Spleen (tissue), 13 donors: ENCODE measurements at regions of chr16 and their contacts with region 1.

Region 1: DNA sequence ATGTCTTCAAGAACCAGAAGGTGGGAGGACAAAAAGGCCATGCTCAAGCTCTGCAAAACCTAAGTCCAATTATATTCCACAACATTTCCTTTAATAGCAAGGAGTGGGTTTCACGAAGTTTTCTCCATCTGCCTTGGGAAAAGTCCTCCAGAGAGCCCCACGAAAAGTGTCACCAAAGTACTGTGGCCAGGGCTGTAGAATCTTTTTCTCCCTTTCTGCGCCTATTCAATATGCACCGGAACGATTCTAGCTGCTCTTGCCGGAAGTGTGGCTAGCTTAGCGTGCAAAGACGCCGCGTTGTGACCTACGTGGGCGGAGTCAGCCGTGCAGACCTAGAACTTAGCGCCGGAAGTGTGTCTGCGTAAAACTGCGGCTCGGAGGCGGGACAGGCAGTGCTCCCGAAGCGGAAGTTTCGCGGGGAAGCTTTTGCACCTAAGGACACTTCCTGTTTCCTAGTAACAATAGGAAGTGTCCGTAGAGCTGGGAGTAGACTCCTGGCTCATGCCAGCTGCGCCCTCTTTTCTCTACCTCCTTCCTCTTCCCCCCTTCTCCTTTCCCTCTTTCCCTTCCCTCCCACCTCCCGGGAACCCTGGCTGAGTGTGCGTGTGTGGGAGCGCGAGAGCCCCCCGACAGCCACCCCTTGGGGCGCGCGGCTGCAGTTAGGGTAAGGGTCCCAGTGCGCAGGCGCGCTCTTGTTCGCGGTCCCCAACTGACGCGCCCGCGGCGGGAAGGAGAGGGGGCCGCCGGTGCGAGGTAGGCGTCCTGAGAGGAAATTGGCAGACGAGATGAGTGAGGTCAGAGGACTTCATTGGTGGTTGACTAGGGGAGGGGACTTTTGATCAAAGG is at the starts of genes ZNF646 and ZNF668:
- DNase-seq: peak; percentile 99
- H3K4me3 ChIP-seq: peak within 1 kb of the TSS; percentile 75 to 100 (median 96)
- H3K27ac ChIP-seq: peak within 1 kb of the TSS; percentile 89 to 98 (median 94)
- H3K4me1 ChIP-seq: peaks cover 21 to 71% (median 45%) of the 10 kb centered on the region in 6 donors
- H3K27me3 ChIP-seq: no peaks in the 10 kb centered on the region
- CTCF ChIP-seq: peak in 3 of 11 experiments; percentile 7 to 39 (median 11)
- POLR2A ChIP-seq: peak in 2 of 3 donors; percentile 31 to 53
- total RNA-seq, gene ZNF646: 20.2 to 28.4 (median 25.6) TPM
- total RNA-seq, gene ZNF668: 8.9 to 12.5 (median 9.2) TPM

Region 2: DNA sequence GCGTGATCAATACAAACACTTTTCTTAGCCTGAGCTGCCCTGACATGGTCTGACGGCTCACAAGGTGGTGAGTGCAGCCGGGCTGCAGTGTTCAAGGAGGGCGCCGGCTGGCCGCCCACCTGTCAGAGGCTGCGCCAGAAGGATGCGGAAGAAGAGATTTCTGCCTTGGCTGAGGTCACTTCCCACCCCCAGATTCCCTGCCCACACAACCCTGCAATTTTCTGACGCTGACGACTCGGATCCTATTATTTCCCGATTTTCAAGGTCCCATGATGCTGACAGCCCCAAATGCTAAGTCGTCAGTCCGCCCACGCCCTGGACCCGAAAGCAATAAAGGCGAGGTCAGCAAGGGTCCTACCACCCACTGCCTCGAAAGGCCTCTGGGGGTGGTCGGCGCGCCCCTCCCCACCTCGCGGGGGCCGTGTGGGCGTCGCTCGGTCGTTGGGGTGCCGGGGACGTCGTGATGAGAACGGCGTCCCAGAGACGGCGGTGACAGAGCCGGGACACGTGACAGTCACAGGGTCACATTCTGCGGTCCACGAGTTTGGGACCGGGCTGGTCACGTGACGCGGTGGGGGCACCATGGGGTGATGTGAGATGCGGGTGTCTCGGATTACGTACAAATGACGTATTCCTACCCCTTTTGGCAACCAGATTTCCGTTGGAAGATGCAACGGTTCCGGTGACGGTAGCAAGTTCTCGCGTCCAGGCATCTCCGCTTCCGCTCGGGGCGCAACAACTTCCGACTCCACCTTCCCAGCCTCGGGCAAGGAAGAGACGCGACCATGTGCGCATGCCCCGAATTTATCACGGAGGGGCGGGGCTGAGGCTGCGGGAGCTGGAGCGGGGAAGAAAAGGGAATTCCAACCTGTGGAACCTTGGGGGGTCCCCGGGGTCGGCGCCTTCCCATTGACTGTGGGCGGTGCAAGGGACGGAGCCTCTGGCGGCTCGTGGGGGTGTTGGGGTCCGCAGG is 41.2 kb before region 1 on chr16 and contains the start of gene STX4:
- intact Hi-C with region 1: loop called (anchors 2 kb)
- DNase-seq: peak; percentile 99
- H3K4me3 ChIP-seq: peak within 1 kb of the TSS; percentile 74 to 100 (median 98)
- H3K27ac ChIP-seq: peak within 1 kb of the TSS; percentile 94 to 99 (median 97)
- H3K4me1 ChIP-seq: peaks cover 17 to 52% (median 34%) of the 10 kb centered on the region in 6 donors
- H3K27me3 ChIP-seq: no peaks in the 10 kb centered on the region
- CTCF ChIP-seq: peak in 2 of 11 experiments; percentile 9 to 17
- POLR2A ChIP-seq: peak; percentile 5 to 36 (median 12)
- total RNA-seq, gene STX4: 54.0 to 118 (median 75.7) TPM